ENCODE measurements at regions of chr15 and their contacts with region 1.

Region 1: GRCh38 chr15:65638681-65639089 is 16.9 kb downstream of the SLC24A1 start:
- DNase-seq: peak; percentile 32
- ATAC-seq: peak; percentile 79
- H3K4me3 Mint-ChIP-seq: no peak overlapping the region
- H3K27ac Mint-ChIP-seq: no peak overlapping the region
- H3K4me1 Mint-ChIP-seq: peaks cover 9% of the 10 kb centered on the region
- H3K27me3 Mint-ChIP-seq: no peaks in the 10 kb centered on the region
- CTCF ChIP-seq: peak; percentile 82

Region 2: DNA sequence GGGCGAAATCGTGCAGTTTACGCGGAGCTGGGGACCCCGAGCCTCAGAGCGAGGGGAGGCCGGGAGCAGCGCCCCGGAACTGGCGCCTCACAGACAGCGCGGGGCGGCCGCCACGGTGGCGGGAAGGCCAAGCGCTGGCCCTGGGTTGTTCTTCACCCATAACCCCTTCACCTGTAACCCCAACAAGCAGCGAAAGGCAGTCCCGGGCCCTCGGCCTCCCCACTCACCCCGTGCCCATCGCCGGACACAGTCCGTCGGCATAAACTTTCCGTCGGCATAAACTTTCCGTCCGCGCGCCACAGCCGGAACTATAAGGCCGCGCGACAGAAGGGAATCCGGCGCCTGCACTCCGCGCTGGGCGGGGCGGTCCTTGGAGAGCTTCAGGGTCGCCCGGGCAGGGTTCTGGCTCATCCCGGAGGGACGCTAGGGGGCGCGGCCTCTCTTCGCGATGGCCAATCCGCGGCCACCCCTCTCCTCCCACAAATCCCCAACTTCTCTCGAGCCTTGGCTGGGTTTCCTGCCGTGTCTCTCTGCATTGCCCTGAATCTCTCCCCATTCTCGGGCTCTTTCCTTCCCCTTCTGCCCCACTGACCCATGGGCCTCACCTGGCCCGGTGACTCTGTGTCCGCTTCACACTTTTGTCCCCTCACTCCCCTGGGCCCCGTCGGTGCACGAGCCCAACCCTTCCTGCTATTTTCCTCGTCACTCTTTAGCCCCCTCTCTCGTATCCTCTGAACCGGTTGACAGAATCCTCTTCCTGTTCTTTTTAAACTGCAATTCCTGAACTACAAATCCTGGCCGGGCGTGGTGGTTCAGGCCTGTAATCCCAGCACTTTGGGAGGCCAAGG is 27.6 kb before region 1 on chr15 and contains the start of gene INTS14:
- CTCF ChIA-PET with region 1: interaction called, 13 read pairs
- POLR2A ChIA-PET with region 1: no interaction called
- intact Hi-C with region 1: no loop called
- DNase-seq: peak; percentile 98
- ATAC-seq: peak; percentile 99
- H3K4me3 Mint-ChIP-seq: peak within 1 kb of the TSS; percentile 93
- H3K27ac Mint-ChIP-seq: peak within 1 kb of the TSS; percentile 91
- H3K4me1 Mint-ChIP-seq: peaks cover 31% of the 10 kb centered on the region
- H3K27me3 Mint-ChIP-seq: no peaks in the 10 kb centered on the region
- CTCF ChIP-seq: peak; percentile 47
- total RNA-seq, gene INTS14: 47.4 to 48.1 TPM

Region 3: GRCh38 chr15:65620833-65621232 is 17.9 kb before region 1 on chr15:
- CTCF ChIA-PET with region 1: interaction called, 17 read pairs
- POLR2A ChIA-PET with region 1: interaction called, 3 read pairs
- intact Hi-C with region 1: no loop called
- DNase-seq: no peak
- ATAC-seq: no peak
- H3K4me3 Mint-ChIP-seq: no peak overlapping the region
- H3K27ac Mint-ChIP-seq: no peak overlapping the region
- H3K4me1 Mint-ChIP-seq: no peaks in the 10 kb centered on the region
- H3K27me3 Mint-ChIP-seq: no peaks in the 10 kb centered on the region
- CTCF ChIP-seq: no peak

Region 4: DNA sequence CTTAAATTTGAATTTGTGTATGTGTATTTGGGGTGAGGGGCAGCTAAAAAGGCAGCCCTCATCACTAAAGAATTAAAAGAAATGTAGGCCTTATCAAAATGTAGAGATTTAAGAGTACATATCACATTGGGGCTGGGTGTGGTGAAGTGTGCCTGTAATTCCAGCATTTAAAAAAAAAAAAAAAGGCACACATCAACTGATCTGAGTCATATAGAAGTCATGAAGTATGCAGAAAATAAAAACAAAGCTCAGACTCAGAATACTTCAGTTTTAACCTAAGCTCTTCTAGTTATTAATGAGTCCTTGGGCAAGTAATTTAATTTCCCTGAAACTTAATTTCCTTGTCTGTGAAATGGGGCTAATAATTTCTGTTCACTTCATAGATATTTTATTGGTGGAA is 14.7 kb after region 1 on chr15:
- CTCF ChIA-PET with region 1: interaction called, 14 read pairs
- POLR2A ChIA-PET with region 1: interaction called, 3 read pairs
- intact Hi-C with region 1: no loop called
- DNase-seq: no peak
- ATAC-seq: no peak
- H3K4me3 Mint-ChIP-seq: no peak overlapping the region
- H3K27ac Mint-ChIP-seq: no peak overlapping the region
- H3K4me1 Mint-ChIP-seq: peaks cover 5% of the 10 kb centered on the region
- H3K27me3 Mint-ChIP-seq: no peaks in the 10 kb centered on the region
- CTCF ChIP-seq: no peak

Region 5: DNA sequence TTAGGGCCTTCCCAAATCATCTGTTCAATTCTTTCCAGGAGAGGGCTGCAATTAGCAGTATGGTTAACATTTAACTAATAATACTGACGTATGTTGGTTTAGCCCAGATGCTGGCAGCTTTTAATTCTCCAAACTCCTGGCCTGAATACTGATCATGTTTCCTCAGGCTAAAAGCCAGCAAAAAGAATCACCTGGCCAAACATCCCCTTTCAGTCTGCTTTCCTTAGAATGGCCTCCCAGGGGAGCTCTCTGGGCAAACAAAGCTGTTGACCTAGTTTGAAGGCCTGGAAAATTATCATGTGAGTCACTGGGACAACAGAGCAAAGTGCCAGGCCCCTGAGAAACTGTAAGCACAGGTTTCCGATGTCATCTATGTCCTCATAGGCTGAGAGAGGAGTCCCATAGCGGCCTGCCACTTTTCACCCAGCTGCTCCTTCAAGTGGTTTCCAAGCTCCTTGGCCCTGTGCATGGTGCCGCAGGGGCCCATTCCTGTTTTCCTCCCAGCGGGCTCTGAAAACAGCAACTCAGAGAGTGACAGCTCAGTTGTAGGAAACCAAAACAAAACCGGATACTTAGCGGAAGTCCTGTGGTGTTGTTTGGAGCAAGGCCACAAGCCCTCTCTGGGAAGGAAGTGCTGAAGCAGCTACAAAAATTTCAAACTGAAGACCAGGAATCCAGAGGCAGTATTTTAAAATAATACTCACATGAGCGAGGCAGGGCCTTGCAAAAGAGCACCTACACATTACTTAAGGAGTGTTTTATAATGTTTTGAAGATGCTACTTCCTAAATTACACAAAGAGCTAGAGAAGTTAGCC is 194.1 kb after region 1 on chr15:
- CTCF ChIA-PET with region 1: interaction called, 10 read pairs
- POLR2A ChIA-PET with region 1: interaction called, 3 read pairs
- intact Hi-C with region 1: no loop called
- DNase-seq: peak; percentile 60
- ATAC-seq: peak; percentile 62
- H3K4me3 Mint-ChIP-seq: peak overlapping the region; percentile 66
- H3K27ac Mint-ChIP-seq: peak overlapping the region; percentile 96
- H3K4me1 Mint-ChIP-seq: peaks cover 43% of the 10 kb centered on the region
- H3K27me3 Mint-ChIP-seq: no peaks in the 10 kb centered on the region
- CTCF ChIP-seq: no peak

Region 6: DNA sequence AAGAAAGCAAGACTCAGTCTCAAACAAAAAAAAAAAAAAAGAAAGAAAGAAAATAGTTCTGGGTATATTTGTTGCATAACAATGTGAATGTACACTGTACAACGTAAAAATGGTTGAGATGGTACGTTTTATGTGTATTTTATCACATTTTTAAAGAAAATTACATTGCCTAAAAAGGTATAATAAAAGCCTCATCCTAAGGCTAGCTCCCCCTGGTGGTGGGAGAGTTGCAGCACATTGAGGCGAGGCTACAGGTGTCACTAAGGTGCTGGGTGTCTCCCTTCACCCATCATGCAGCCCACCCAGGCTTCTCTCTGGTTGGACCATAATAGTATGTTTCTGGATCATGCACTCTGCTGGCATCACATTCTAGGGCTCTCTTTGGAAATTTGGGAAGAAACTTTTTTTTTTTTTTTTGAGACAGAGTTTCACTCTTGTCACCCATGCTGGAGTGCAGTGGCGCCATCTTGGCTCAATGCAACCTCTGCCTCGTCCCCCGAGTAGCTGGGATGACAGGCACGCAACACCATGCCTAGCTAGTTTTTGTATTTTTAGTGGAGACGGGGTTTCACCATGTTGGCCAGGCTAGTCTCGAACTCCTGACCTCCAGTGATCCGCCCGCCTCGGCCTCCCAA is 218.3 kb after region 1 on chr15:
- CTCF ChIA-PET with region 1: interaction called, 7 read pairs
- POLR2A ChIA-PET with region 1: no interaction called
- intact Hi-C with region 1: loop called (anchors 5 kb)
- DNase-seq: peak; percentile 91
- ATAC-seq: peak; percentile 71
- H3K4me3 Mint-ChIP-seq: no peak overlapping the region
- H3K27ac Mint-ChIP-seq: no peak overlapping the region
- H3K4me1 Mint-ChIP-seq: peaks cover 12% of the 10 kb centered on the region
- H3K27me3 Mint-ChIP-seq: no peaks in the 10 kb centered on the region
- CTCF ChIP-seq: peak; percentile 89

Region 7: GRCh38 chr15:65869127-65869953 is 230.7 kb after region 1 on chr15 and contains the start of gene RAB11A:
- CTCF ChIA-PET with region 1: interaction called, 12 read pairs
- POLR2A ChIA-PET with region 1: no interaction called
- intact Hi-C with region 1: no loop called
- DNase-seq: peak; percentile 98
- ATAC-seq: peak; percentile 94
- H3K4me3 Mint-ChIP-seq: peak within 1 kb of the TSS; percentile 99
- H3K27ac Mint-ChIP-seq: peak within 1 kb of the TSS; percentile 98
- H3K4me1 Mint-ChIP-seq: peaks cover 30% of the 10 kb centered on the region
- H3K27me3 Mint-ChIP-seq: peaks cover 4% of the 10 kb centered on the region
- CTCF ChIP-seq: peak; percentile 19
- total RNA-seq, gene RAB11A: 106 to 113 TPM

Measured in activated CD8-positive, alpha-beta T cell treated with anti-CD3 and anti-CD28 coated beads for 36 hours (primary cell).